ENCODE measurements at regions of chr16 and their contacts with region 1.

Region 1: GRCh38 chr16:23504451-23505179 is 5.7 kb downstream of the GGA2 start:
- DNase-seq: peak in 5 of 10 donors; percentile 42 to 73 (median 46)
- H3K4me3 ChIP-seq: peak overlapping the region in 15 of 59 donors; percentile 1 to 35 (median 10)
- H3K27ac ChIP-seq: peak overlapping the region in 31 of 59 donors; percentile 2 to 73 (median 28)
- H3K27me3 ChIP-seq: no peaks in the 10 kb centered on the region
- CTCF ChIP-seq: no peak

Region 2: DNA sequence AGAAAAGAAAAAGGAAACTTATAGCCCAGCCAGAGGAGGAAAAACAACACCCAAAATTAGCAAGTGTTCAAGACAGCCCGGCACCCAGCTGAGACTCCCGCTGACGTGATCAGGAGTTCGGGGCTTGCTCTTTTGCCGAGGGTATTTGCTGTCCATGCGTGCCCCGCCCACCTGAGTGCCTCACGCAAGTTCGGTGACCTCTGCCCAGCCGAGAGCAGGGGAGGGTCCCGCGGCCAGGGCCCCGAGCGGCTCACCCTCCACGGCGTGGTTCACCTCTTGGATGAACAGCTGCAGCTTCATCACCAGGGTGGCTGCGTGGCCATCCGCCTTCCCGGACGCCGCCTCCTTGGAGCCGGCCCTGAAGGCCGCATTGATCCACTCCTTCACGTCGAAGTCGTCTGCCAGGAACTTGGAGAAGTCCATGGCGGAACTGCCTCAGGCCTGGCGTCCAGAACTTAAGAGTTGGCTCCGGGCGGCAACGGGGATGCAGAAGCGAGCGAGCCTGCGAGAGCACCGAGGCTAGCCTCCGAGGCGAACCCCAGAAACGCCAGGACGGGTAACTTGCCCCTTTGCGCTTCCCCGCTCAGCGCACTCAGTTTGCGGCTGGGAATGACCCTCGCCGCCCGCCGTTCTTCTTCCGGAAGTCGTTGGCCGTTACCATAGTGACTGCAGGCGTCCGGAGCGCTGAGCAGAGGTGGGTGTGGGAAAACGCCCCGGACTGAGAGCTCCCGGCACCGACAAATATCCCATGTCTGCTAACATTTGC is 51.9 kb before region 1 on chr16 and contains the start of gene COG7:
- intact Hi-C with region 1: loop called in 1 of 2 experiments (anchors 10 kb)
- DNase-seq: peak; percentile 70 to 92 (median 84)
- H3K4me3 ChIP-seq: peak within 1 kb of the TSS; percentile 52 to 99 (median 93)
- H3K27ac ChIP-seq: peak within 1 kb of the TSS in 55 of 59 donors; percentile 12 to 91 (median 76)
- H3K27me3 ChIP-seq: peaks cover 0 to 7% (median 0%) of the 10 kb centered on the region in 45 donors
- CTCF ChIP-seq: peak in 27 of 56 donors; percentile 10 to 54 (median 25)
- total RNA-seq, gene COG7: 22.6 to 48.1 (median 35.2) TPM

Region 3: GRCh38 chr16:23670137-23670776 is 165.6 kb after region 1 on chr16:
- intact Hi-C with region 1: no loop called
- DNase-seq: no peak
- H3K4me3 ChIP-seq: no peak overlapping the region
- H3K27ac ChIP-seq: no peak overlapping the region
- H3K27me3 ChIP-seq: no peaks in the 10 kb centered on the region
- CTCF ChIP-seq: no peak

Measured in dorsolateral prefrontal cortex (tissue), 120 donors.